Upper lobe of right lung (tissue), 1 donor: ENCODE measurements at regions of chr12 and their contacts with region 1.

Region 1: DNA sequence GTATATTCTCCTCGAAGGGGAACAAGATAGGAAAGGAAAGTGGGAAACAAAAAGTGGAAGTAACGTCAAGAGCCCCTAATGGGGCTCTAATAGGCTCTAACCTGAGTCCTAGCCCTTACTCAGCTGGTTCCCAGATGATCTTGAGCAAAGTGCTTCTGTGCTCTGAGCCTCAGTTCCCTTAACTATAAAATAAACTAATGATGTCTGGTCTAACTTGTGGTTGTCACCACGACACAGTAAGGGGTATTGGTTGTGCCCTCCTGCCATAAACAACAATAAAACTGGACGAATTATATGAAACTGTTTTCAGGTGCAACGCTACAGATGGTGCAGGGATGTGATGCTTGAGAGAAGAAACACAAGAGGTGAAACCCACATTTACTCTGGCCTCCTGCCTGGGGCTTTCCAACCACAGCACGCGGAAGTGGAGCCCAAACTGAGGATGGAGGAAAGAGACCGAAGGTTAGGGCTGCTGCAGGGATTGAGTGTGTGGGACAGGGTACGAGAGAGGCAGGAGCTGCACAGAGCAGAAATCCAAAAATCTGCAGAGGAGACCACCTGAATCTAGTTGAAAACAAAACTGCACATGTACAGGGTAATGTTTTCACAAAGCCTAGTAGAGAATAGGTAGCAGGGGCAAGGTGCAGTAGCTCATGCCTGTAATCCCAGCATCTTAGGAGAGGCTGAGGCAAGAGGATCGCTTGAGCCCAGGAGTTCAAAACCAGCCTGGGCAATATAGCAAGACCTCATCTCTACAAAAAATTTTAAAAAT is 45.6 kb upstream of the BCL2L14 start:
- DNase-seq: no peak
- ATAC-seq: no peak
- H3K4me3 ChIP-seq: no peak overlapping the region
- H3K27ac ChIP-seq: no peak overlapping the region
- H3K4me1 ChIP-seq: no peaks in the 10 kb centered on the region
- H3K27me3 ChIP-seq: no peaks in the 10 kb centered on the region
- CTCF ChIP-seq: no peak

Region 2: GRCh38 chr12:11581179-11581755 is 443.8 kb before region 1 on chr12:
- intact Hi-C with region 1: loop called (anchors 5 kb)
- DNase-seq: no peak
- ATAC-seq: peak; percentile 33
- H3K4me3 ChIP-seq: no peak overlapping the region
- H3K27ac ChIP-seq: no peak overlapping the region
- H3K4me1 ChIP-seq: peaks cover 9% of the 10 kb centered on the region
- H3K27me3 ChIP-seq: no peaks in the 10 kb centered on the region
- CTCF ChIP-seq: peak; percentile 64

Region 3: DNA sequence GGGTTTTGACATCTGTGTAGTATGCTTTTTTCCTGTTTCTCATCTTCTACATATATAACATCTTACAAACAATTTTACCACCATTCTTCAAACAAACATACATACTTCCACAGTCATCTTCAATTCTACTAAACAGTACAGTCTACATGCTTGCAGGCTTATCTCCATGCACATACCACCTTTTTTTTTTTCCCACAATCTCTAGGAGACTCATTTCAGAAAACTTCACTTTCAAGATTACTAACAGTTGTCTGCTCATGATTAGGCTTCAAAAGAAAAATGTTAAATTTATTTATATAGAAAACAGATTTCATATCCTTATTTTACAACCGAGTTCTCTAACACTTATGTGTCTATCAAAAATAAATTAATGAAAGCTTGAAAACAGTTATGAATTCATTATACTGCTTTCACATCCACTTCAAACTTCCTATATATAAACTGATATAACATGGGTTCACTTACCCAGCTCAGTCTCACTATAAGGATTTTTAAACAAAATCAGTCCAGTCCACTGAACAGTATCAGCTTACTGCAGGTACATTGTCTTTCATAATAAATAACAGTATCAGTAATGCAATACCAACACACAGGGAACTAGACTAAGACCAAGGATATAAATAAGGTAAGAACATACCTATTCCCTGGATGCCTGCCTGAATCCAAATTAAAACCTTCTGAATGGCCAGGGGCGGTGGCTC is 199.3 kb after region 1 on chr12:
- intact Hi-C with region 1: no loop called
- DNase-seq: no peak
- ATAC-seq: no peak
- H3K4me3 ChIP-seq: no peak overlapping the region
- H3K27ac ChIP-seq: no peak overlapping the region
- H3K4me1 ChIP-seq: peaks cover 12% of the 10 kb centered on the region
- H3K27me3 ChIP-seq: no peaks in the 10 kb centered on the region
- CTCF ChIP-seq: no peak